GM12878 (cell line): ENCODE measurements at regions of chr18 and their contacts with region 1.

Region 1: GRCh38 chr18:57959278-57959677 is 84.7 kb upstream of the NEDD4L start:
- DNase-seq: no peak
- ATAC-seq: peak; percentile 86
- H3K4me3 ChIP-seq: no peak overlapping the region
- H3K27ac ChIP-seq: no peak overlapping the region
- H3K4me1 ChIP-seq: no peaks in the 10 kb centered on the region
- H3K27me3 ChIP-seq: 0 out of 4 replicates have a peak, but pooled peaks cover 0 to 2% of the 10 kb centered on the region in 2 experiments
- CTCF ChIP-seq: peak; percentile 45 to 54 (median 49); a peak in 5 of 6 replicates
- EP300 ChIP-seq: no peak
- POLR2A ChIP-seq: no peak
- RAD21 ChIP-seq: 0 out of 2 replicates have a peak, but pooled peaks have one; percentile 27

Region 2: GRCh38 chr18:57523171-57523956 is 435.9 kb before region 1 on chr18:
- CTCF ChIA-PET with region 1: no interaction called
- POLR2A ChIA-PET with region 1: no interaction called
- RAD21 ChIA-PET with region 1: no interaction called
- SMC1A ChIA-PET with region 1: no interaction called
- in situ Hi-C with region 1: no loop called
- intact Hi-C with region 1: no loop called
- DNase-seq: no peak
- ATAC-seq: no peak
- H3K4me3 ChIP-seq: no peak overlapping the region
- H3K27ac ChIP-seq: no peak overlapping the region
- H3K4me1 ChIP-seq: no peaks in the 10 kb centered on the region
- H3K27me3 ChIP-seq: peaks cover 0 to 3% of the 10 kb centered on the region in 2 experiments; a peak in 1 of 4 replicates
- CTCF ChIP-seq: no peak
- EP300 ChIP-seq: no peak
- POLR2A ChIP-seq: no peak
- RAD21 ChIP-seq: no peak

Region 3: GRCh38 chr18:57975805-57976204 is 16.5 kb after region 1 on chr18:
- CTCF ChIA-PET with region 1: interaction called, 4 read pairs
- POLR2A ChIA-PET with region 1: no interaction called
- RAD21 ChIA-PET with region 1: interaction called, 4 read pairs
- SMC1A ChIA-PET with region 1: interaction called, 12 read pairs
- in situ Hi-C with region 1: no loop called
- intact Hi-C with region 1: no loop called
- DNase-seq: no peak
- ATAC-seq: peak; percentile 45
- H3K4me3 ChIP-seq: 0 out of 2 replicates have a peak overlapping the region, but pooled peaks have one; percentile 41
- H3K27ac ChIP-seq: 0 out of 2 replicates have a peak overlapping the region, but pooled peaks have one; percentile 14
- H3K4me1 ChIP-seq: peaks cover 5% of the 10 kb centered on the region
- H3K27me3 ChIP-seq: no peaks in the 10 kb centered on the region
- CTCF ChIP-seq: no peak
- EP300 ChIP-seq: no peak
- POLR2A ChIP-seq: no peak
- RAD21 ChIP-seq: no peak

Region 4: GRCh38 chr18:58321986-58322385 is 362.7 kb after region 1 on chr18:
- CTCF ChIA-PET with region 1: no interaction called
- POLR2A ChIA-PET with region 1: no interaction called
- RAD21 ChIA-PET with region 1: interaction called, 3 read pairs
- SMC1A ChIA-PET with region 1: interaction called, 3 read pairs
- in situ Hi-C with region 1: no loop called
- intact Hi-C with region 1: loop called (anchors 5 kb)
- DNase-seq: no peak
- ATAC-seq: peak; percentile 96
- H3K4me3 ChIP-seq: no peak overlapping the region
- H3K27ac ChIP-seq: no peak overlapping the region
- H3K4me1 ChIP-seq: peaks cover 7% of the 10 kb centered on the region
- H3K27me3 ChIP-seq: no peaks in the 10 kb centered on the region
- CTCF ChIP-seq: peak; percentile 45 to 77 (median 56); a peak in 4 of 6 replicates
- EP300 ChIP-seq: no peak
- POLR2A ChIP-seq: no peak
- RAD21 ChIP-seq: peak; percentile 77